ENCODE measurements at regions of chr1 and their contacts with region 1.

Region 1: GRCh38 chr1:154974063-154974807 is at the start of gene CKS1B:
- DNase-seq: peak; percentile 100
- H3K4me3 ChIP-seq: peak within 1 kb of the TSS; percentile 69 to 73 (median 70)
- H3K27ac ChIP-seq: peak within 1 kb of the TSS; percentile 98
- H3K4me1 ChIP-seq: peaks cover 27% of the 10 kb centered on the region
- H3K27me3 ChIP-seq: no peaks in the 10 kb centered on the region
- CTCF ChIP-seq: no peak
- total RNA-seq, gene CKS1B: 44.2 to 95.6 TPM

Region 2: GRCh38 chr1:153866045-153866850 is 1108.0 kb before region 1 on chr1:
- CTCF ChIA-PET with region 1: no interaction called
- dilution Hi-C with region 1: no loop called
- in situ Hi-C with region 1: no loop called
- intact Hi-C with region 1: no loop called
- DNase-seq: no peak
- H3K4me3 ChIP-seq: no peak overlapping the region
- H3K27ac ChIP-seq: no peak overlapping the region
- H3K4me1 ChIP-seq: no peaks in the 10 kb centered on the region
- H3K27me3 ChIP-seq: no peaks in the 10 kb centered on the region
- CTCF ChIP-seq: no peak

Region 3: GRCh38 chr1:154014154-154014910 is 959.9 kb before region 1 on chr1:
- CTCF ChIA-PET with region 1: no interaction called
- dilution Hi-C with region 1: no loop called
- in situ Hi-C with region 1: no loop called
- intact Hi-C with region 1: no loop called
- DNase-seq: peak; percentile 21
- H3K4me3 ChIP-seq: no peak overlapping the region
- H3K27ac ChIP-seq: no peak overlapping the region
- H3K4me1 ChIP-seq: no peaks in the 10 kb centered on the region
- H3K27me3 ChIP-seq: no peaks in the 10 kb centered on the region
- CTCF ChIP-seq: peak in 1 of 2 donors; percentile 2

Region 4: GRCh38 chr1:154220071-154220969 is 753.9 kb before region 1 on chr1 and contains the start of gene UBAP2L:
- CTCF ChIA-PET with region 1: no interaction called
- dilution Hi-C with region 1: no loop called
- in situ Hi-C with region 1: no loop called
- intact Hi-C with region 1: loop called (anchors 5 kb)
- DNase-seq: peak; percentile 100
- H3K4me3 ChIP-seq: peak within 1 kb of the TSS; percentile 94 to 98 (median 95)
- H3K27ac ChIP-seq: peak within 1 kb of the TSS; percentile 97
- H3K4me1 ChIP-seq: peaks cover 19% of the 10 kb centered on the region
- H3K27me3 ChIP-seq: no peaks in the 10 kb centered on the region
- CTCF ChIP-seq: no peak
- total RNA-seq, gene UBAP2L: 63.7 to 168 TPM

Region 5: DNA sequence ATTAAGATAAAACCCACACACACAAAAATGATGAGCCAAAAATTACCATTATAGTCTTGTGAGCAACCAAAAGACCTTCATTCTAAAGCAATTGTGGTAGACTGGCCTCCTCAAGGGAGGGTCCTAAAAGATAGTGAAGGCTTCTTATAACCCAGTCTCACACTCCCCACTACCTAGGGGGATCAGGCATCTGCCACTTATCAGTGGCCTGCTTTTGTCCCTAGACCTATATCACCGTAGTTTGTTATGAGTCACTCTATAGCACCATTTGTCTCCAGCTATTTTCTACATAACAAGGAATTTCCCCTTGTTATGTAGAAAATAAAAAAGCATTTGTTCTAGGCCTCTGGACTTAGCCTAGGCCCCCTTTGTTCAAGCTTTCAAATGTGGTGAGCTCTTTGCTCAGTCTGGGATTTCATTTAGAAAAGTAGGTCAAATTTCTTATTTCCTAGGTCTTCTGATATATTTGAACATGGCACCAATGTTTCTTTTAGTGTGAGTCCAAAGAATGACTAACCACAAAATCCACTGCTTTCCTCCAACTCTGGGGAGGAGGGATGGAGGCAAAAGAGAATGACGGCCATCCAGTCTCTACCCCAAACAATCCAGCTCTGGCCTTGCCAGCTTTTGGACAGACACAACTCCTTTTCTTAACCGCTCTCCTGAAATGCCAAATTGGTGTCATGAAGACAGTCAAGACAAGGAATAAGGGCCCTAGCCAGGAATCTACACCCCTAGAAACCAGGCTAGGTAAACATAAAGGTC is 375.2 kb before region 1 on chr1:
- CTCF ChIA-PET with region 1: no interaction called
- dilution Hi-C with region 1: no loop called
- in situ Hi-C with region 1: no loop called
- intact Hi-C with region 1: no loop called
- DNase-seq: no peak
- H3K4me3 ChIP-seq: no peak overlapping the region
- H3K27ac ChIP-seq: no peak overlapping the region
- H3K4me1 ChIP-seq: no peaks in the 10 kb centered on the region
- H3K27me3 ChIP-seq: no peaks in the 10 kb centered on the region
- CTCF ChIP-seq: no peak

Region 6: GRCh38 chr1:154925335-154926170 is 48.7 kb before region 1 on chr1:
- CTCF ChIA-PET with region 1: no interaction called
- dilution Hi-C with region 1: no loop called
- in situ Hi-C with region 1: no loop called
- intact Hi-C with region 1: no loop called
- DNase-seq: peak; percentile 44
- H3K4me3 ChIP-seq: no peak overlapping the region
- H3K27ac ChIP-seq: no peak overlapping the region
- H3K4me1 ChIP-seq: peaks cover 18% of the 10 kb centered on the region
- H3K27me3 ChIP-seq: no peaks in the 10 kb centered on the region
- CTCF ChIP-seq: no peak

Region 7: GRCh38 chr1:154961497-154962262 is 12.6 kb before region 1 on chr1 and contains the start of gene PYGO2:
- CTCF ChIA-PET with region 1: interaction called, 5 read pairs
- dilution Hi-C with region 1: no loop called
- in situ Hi-C with region 1: no loop called
- intact Hi-C with region 1: loop called (anchors 1 kb)
- DNase-seq: peak; percentile 81
- H3K4me3 ChIP-seq: peak within 1 kb of the TSS; percentile 55 to 83 (median 71)
- H3K27ac ChIP-seq: peak within 1 kb of the TSS; percentile 49
- H3K4me1 ChIP-seq: peaks cover 24% of the 10 kb centered on the region
- H3K27me3 ChIP-seq: no peaks in the 10 kb centered on the region
- CTCF ChIP-seq: peak; percentile 23 to 32
- total RNA-seq, gene PYGO2: 12.3 to 24.4 TPM

Region 8: DNA sequence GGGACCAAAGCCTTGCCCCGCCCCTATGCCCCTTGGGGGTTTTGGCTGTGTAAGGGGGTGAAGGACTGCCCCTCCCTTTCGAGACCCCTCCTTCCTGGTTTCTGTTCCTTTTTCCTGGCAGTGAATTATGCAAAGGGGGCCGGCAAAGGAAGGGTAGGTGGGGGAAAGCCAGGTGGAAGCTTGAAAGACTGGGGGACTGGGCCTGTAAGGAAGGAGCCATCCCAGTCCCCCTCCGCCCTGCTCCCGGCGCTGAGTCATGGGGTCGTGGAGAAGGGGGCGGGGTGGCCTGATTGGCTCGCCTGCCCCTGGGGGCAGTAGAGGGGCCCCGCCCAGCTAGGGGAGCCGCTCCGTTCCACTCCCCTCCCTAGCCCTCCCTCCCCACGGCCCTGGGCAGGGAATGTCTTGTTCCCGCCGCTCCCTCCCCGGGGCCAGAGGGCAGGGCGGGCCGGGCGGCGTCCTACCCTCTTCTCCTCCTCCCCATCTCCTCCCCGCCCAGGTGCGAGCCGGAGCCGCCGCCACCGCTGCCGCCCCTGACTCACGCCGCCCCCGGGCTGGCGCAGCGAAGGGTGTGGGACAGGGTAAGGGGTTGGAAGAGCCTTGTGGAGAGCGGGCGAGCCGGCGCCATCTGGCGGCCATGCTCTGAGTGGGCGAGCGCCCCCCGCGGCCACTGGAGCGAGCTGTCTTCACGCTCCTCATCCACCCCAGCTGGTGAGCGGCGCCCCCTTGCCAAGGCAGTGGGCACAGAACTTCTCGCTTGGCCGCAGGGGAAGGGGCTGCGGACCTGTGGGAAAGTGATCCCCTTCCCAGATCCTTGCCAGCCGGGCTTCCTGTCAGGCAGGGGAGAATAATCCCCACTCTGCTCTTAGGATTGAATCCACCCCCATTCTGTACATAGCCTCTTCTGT is 43.1 kb after region 1 on chr1:
- CTCF ChIA-PET with region 1: interaction called, 3 read pairs
- dilution Hi-C with region 1: no loop called
- in situ Hi-C with region 1: loop called in 1 of 2 experiments (anchors 10 kb)
- intact Hi-C with region 1: loop called (anchors 1 kb)
- DNase-seq: peak; percentile 99
- H3K4me3 ChIP-seq: peak overlapping the region in 2 of 3 experiments; percentile 12 to 31
- H3K27ac ChIP-seq: peak overlapping the region; percentile 50
- H3K4me1 ChIP-seq: peaks cover 23% of the 10 kb centered on the region
- H3K27me3 ChIP-seq: no peaks in the 10 kb centered on the region
- CTCF ChIP-seq: peak; percentile 97 to 100

Region 9: GRCh38 chr1:155084722-155085503 is 110.7 kb after region 1 on chr1:
- CTCF ChIA-PET with region 1: no interaction called
- dilution Hi-C with region 1: no loop called
- in situ Hi-C with region 1: no loop called
- intact Hi-C with region 1: loop called (anchors 2 kb)
- DNase-seq: peak; percentile 90
- H3K4me3 ChIP-seq: peak overlapping the region; percentile 71 to 86 (median 73)
- H3K27ac ChIP-seq: peak overlapping the region; percentile 70
- H3K4me1 ChIP-seq: peaks cover 46% of the 10 kb centered on the region
- H3K27me3 ChIP-seq: peaks cover 20% of the 10 kb centered on the region
- CTCF ChIP-seq: peak; percentile 75 to 89